ENCODE measurements at regions of chr12 and their contacts with region 1.

Region 1: GRCh38 chr12:88448337-88448915 is 131.8 kb downstream of the KITLG start:
- DNase-seq: no peak
- ATAC-seq: no peak
- H3K4me3 ChIP-seq: no peak overlapping the region
- H3K27ac ChIP-seq: no peak overlapping the region
- H3K4me1 ChIP-seq: no peaks in the 10 kb centered on the region
- H3K27me3 ChIP-seq: no peaks in the 10 kb centered on the region
- CTCF ChIP-seq: no peak

Region 2: GRCh38 chr12:87603727-87604126 is 844.7 kb before region 1 on chr12:
- CTCF ChIA-PET with region 1: no interaction called
- POLR2A ChIA-PET with region 1: no interaction called
- intact Hi-C with region 1: no loop called
- DNase-seq: no peak
- ATAC-seq: no peak
- H3K4me3 ChIP-seq: no peak overlapping the region
- H3K27ac ChIP-seq: no peak overlapping the region
- H3K4me1 ChIP-seq: no peaks in the 10 kb centered on the region
- H3K27me3 ChIP-seq: no peaks in the 10 kb centered on the region
- CTCF ChIP-seq: no peak

Region 3: DNA sequence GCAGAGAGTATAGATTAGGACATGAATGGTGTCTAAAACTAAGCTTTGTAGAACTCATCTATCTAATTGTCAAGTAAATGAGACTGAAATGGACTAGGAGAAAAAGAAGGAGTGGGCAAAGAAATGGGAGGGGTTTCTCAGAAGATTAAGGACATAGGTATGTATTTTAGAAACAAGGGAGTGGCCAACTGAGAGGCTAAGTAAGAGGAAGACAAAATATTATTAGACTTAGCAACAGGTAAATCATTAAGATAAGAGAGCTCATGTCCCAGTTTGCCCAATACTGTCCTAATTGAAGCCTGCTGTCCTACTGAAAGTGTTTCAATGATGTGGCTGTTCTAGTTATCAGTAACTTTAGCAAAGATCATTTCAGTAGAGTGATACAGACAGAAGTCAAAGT is 39.6 kb before region 1 on chr12:
- CTCF ChIA-PET with region 1: no interaction called
- POLR2A ChIA-PET with region 1: no interaction called
- intact Hi-C with region 1: no loop called
- DNase-seq: peak; percentile 13
- ATAC-seq: no peak
- H3K4me3 ChIP-seq: no peak overlapping the region
- H3K27ac ChIP-seq: no peak overlapping the region
- H3K4me1 ChIP-seq: peaks cover 4% of the 10 kb centered on the region; the same call in 1 of the 2 replicates
- H3K27me3 ChIP-seq: no peaks in the 10 kb centered on the region
- CTCF ChIP-seq: no peak

Region 4: GRCh38 chr12:88420457-88420856 is 28.0 kb before region 1 on chr12:
- CTCF ChIA-PET with region 1: no interaction called
- POLR2A ChIA-PET with region 1: no interaction called
- intact Hi-C with region 1: loop called (anchors 1 kb)
- DNase-seq: peak; percentile 92
- ATAC-seq: peak; percentile 78
- H3K4me3 ChIP-seq: no peak overlapping the region
- H3K27ac ChIP-seq: peak overlapping the region; percentile 64
- H3K4me1 ChIP-seq: peaks cover 52% of the 10 kb centered on the region
- H3K27me3 ChIP-seq: no peaks in the 10 kb centered on the region
- CTCF ChIP-seq: no peak

Measured in PC-3 (cell line).